ENCODE measurements at regions of chr2 and their contacts with region 1.

Region 1: GRCh38 chr2:118403658-118404451 is 315.6 kb downstream of the INSIG2 start:
- DNase-seq: no peak
- H3K4me3 ChIP-seq: no peak overlapping the region
- H3K27ac ChIP-seq: no peak overlapping the region
- H3K4me1 ChIP-seq: no peaks in the 10 kb centered on the region
- H3K27me3 ChIP-seq: no peaks in the 10 kb centered on the region
- CTCF ChIP-seq: no peak
- POLR2A ChIP-seq: no peak

Region 2: DNA sequence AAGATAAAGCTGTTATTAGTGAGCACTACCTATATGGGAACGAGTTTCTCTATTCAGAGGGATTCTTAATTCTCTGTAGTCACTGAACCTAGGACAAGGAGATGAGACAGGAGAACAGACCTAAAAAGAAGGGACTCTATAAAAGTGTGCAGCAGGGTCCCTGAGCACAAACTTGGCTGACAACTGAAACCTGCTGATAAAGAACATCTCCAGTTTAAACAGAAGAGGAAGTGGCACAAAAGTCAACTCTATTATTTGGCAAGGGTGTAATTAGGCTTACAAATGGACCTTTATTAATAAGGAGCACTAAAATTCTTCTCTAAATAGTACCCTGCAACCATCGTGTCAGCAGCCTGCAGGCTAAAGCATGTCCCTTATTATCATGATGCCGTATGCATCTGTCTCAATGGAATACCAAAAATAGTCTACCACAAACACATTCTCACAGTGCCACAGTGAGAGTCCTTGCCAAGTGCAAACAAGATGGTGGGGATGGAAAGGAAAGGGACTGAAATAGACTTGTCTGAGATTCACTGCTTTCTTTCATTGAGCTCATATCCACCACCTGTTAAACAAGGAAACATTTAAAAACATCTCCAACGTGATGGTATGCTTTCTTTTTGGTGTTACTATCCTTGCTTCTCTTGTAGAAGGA is 55.3 kb before region 1 on chr2:
- CTCF ChIA-PET with region 1: no interaction called
- POLR2A ChIA-PET with region 1: no interaction called
- dilution Hi-C with region 1: no loop called
- intact Hi-C with region 1: loop called (anchors 2 kb)
- DNase-seq: no peak
- H3K4me3 ChIP-seq: no peak overlapping the region
- H3K27ac ChIP-seq: no peak overlapping the region
- H3K4me1 ChIP-seq: no peaks in the 10 kb centered on the region
- H3K27me3 ChIP-seq: no peaks in the 10 kb centered on the region
- CTCF ChIP-seq: no peak
- POLR2A ChIP-seq: no peak

Measured in endothelial cell of umbilical vein (primary cell).